Dorsolateral prefrontal cortex (tissue), 120 donors: ENCODE measurements at regions of chr17 and their contacts with region 1.

Region 1: GRCh38 chr17:55421179-55421934 is at the start of gene MMD:
- DNase-seq: peak in 6 of 10 donors; percentile 15 to 56 (median 34)
- H3K4me3 ChIP-seq: peak within 1 kb of the TSS; percentile 65 to 99 (median 92)
- H3K27ac ChIP-seq: peak within 1 kb of the TSS in 58 of 59 donors; percentile 3 to 95 (median 80)
- H3K27me3 ChIP-seq: no peaks in the 10 kb centered on the region
- CTCF ChIP-seq: no peak
- total RNA-seq, gene MMD: 29.5 to 73.9 (median 45.2) TPM

Region 2: GRCh38 chr17:55366020-55366481 is 55.3 kb before region 1 on chr17:
- intact Hi-C with region 1: loop called in 1 of 2 experiments (anchors 5 kb)
- DNase-seq: peak in 2 of 10 donors; percentile 46 to 49
- H3K4me3 ChIP-seq: peak overlapping the region in 2 of 59 donors; percentile 15 to 38
- H3K27ac ChIP-seq: peak overlapping the region in 41 of 59 donors; percentile 1 to 81 (median 49)
- H3K27me3 ChIP-seq: no peaks in the 10 kb centered on the region
- CTCF ChIP-seq: no peak